ENCODE measurements at regions of chr16 and their contacts with region 1.

Region 1: DNA sequence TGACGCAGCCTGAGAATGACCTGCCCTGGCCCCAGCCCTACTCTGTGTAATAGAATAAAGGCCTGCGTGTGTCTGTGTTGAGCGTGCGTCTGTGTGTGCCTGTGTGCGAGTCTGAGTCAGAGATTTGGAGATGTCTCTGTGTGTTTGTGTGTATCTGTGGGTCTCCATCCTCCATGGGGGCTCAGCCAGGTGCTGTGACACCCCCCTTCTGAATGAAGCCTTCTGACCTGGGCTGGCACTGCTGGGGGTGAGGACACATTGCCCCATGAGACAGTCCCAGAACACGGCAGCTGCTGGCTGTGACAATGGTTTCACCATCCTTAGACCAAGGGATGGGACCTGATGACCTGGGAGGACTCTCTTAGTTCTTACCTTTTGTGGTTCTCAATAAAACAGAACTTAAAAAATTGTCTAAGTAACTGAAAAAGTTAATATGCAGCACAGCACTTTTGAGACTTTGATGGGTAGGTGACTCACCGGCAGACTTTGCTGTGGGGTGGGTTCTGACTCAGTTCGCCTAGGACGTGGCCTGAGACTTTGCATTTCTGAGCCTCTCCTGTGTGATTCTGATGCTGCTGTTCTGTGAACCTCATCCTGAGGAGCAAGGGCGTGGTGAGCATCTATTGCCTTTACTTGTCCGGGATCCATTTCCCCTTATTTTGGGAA is 5.7 kb downstream of the LAT start:
- DNase-seq: peak; percentile 81
- H3K4me3 Mint-ChIP-seq: peak overlapping the region; percentile 82
- H3K27ac Mint-ChIP-seq: peak overlapping the region; percentile 92
- H3K4me1 Mint-ChIP-seq: peaks cover 41% of the 10 kb centered on the region
- H3K27me3 Mint-ChIP-seq: no peaks in the 10 kb centered on the region

Region 2: GRCh38 chr16:28950648-28951409 is 39.7 kb before region 1 on chr16 and contains the start of gene NFATC2IP:
- intact Hi-C with region 1: loop called (anchors 1 kb)
- DNase-seq: peak; percentile 100
- H3K4me3 Mint-ChIP-seq: peak within 1 kb of the TSS; percentile 93
- H3K27ac Mint-ChIP-seq: peak within 1 kb of the TSS; percentile 94
- H3K4me1 Mint-ChIP-seq: peaks cover 27% of the 10 kb centered on the region
- H3K27me3 Mint-ChIP-seq: no peaks in the 10 kb centered on the region
- total RNA-seq, gene NFATC2IP: 108 and 112 TPM in 2 replicates

Region 3: DNA sequence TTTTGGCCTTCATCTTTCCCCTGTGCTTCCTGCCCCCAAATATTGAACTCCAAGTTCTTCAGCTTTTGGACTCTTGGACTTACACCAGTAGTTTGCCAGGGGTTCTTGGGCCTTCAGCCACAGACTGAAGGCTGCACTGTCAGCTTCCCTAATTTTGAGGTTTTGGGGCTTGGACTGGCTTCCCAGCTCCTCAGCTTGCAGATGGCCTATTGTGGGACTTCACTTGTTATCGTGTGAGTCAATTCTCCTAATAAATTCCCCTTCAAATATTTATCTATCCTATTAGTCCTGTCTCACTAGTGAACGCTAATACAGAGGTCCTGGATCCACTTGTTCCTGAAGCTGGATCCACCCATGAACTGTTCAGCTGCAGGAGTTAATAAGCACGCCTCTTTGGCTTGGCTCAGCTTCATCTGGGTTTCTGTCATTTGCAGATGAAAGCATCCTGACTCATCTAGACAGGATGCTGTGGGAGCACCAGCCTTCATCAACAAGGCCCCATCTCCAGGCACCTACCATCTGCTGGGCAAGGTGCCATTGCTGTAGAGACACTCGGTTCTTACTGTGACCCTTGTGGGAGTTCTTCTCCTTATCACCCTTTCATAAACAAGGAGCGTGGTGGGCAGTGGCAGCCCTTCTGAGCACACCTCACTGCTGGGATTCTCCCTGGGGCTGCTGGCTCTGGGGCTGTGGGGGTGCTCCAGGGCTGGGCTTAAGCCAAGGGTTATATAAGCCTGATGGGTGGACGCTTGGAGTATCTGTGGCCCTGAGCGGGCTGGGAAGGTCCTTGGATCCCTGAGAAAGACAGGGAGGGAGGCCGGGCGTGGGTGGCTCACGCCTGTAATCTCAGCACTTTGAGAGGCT is 17.5 kb after region 1 on chr16:
- intact Hi-C with region 1: loop called (anchors 1 kb)
- DNase-seq: peak; percentile 89
- H3K4me3 Mint-ChIP-seq: peak overlapping the region; percentile 69
- H3K27ac Mint-ChIP-seq: peak overlapping the region; percentile 95
- H3K4me1 Mint-ChIP-seq: peaks cover 43% of the 10 kb centered on the region
- H3K27me3 Mint-ChIP-seq: no peaks in the 10 kb centered on the region

Region 4: DNA sequence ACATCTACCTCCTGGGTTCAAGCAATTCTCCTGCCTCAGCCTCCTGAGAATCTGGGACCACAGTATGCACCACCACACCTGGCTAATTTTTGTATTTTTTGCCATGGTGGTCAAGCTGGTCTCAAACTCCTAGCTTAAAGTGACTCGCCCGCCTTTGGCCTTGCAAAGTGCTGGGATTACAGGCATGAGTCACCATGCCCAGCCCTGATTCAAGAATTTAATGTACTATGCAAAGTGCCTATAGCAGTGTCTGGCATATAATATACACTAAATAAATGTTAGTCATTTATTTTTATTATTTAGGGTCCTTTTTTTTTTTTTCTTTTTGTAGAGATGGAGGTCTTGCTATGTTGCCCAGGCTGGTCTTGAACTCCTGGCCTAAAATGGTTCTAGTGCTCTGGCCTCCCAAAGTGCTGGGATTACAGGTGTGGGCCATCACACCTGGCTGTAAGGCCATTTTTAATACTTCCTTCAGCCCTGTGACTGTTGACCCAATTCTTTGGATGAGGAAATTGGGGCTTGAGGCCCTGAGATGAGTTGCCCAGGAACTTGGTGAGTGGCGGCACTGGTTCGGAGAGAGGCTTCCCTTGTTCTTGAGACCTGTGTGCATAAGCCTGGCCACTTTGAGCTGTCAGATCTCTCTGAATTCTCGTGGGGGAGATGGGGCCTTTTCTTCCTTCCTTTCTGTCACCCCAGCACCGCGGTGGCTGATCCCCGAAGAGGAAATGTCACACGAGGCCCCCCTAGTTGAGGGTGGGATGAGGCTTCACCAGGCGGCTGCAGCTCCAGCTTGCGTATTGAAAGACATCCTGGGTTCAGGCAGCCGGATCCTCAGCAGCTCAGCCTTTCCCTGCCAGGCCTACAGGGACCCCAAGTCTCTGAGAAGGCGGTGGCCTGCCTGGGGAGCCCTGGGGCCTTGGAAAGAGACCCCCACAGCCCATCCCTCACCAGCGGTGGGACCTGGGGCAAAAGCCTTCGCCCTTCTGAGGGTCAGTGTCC is 33.1 kb after region 1 on chr16:
- intact Hi-C with region 1: loop called (anchors 1 kb)
- DNase-seq: no peak
- H3K4me3 Mint-ChIP-seq: no peak overlapping the region
- H3K27ac Mint-ChIP-seq: peak overlapping the region; percentile 62
- H3K4me1 Mint-ChIP-seq: peaks cover 45% of the 10 kb centered on the region
- H3K27me3 Mint-ChIP-seq: no peaks in the 10 kb centered on the region

Region 5: DNA sequence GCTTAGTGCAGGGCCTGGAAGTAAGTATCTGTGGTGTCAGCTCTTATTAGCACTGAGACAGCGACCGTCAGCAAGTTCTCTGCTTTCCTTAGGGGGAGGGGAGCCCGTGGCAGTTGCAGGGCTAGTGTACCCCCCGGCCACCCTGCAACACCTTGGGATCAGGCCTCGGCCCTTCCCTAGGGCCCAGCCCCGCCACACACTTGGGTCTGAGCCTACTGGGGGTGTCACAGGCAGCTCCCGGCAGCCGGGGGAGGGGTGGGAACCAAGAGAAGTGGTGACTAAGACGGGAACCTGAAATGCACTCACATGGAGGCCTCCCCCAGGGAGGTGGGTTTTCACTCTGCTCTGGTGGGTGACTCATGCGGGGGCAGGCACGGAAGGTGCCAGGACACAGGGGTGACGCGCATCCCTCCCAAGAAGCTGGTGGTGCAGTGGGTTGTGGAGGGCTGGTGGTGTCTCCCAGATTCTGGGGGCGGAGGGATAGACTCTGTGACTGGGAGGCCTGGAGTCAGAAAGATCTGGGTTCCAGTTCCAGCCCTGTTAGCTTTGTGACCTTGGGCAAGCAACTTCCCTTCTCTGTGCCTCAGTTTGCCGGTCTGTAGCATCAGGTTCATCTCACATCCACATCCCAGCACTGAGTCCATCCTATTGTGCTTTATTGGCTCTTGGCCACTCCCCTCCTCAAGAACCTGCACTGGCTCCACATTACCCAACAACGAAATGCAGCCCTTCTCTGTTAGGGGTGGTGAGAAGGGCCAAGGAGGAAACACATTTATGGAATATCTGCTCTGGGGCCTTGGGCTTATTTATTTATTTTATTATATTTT is 38.9 kb after region 1 on chr16:
- intact Hi-C with region 1: loop called (anchors 1 kb)
- DNase-seq: peak; percentile 84
- H3K4me3 Mint-ChIP-seq: peak overlapping the region; percentile 52
- H3K27ac Mint-ChIP-seq: peak overlapping the region; percentile 85
- H3K4me1 Mint-ChIP-seq: peaks cover 28% of the 10 kb centered on the region
- H3K27me3 Mint-ChIP-seq: no peaks in the 10 kb centered on the region

Region 6: DNA sequence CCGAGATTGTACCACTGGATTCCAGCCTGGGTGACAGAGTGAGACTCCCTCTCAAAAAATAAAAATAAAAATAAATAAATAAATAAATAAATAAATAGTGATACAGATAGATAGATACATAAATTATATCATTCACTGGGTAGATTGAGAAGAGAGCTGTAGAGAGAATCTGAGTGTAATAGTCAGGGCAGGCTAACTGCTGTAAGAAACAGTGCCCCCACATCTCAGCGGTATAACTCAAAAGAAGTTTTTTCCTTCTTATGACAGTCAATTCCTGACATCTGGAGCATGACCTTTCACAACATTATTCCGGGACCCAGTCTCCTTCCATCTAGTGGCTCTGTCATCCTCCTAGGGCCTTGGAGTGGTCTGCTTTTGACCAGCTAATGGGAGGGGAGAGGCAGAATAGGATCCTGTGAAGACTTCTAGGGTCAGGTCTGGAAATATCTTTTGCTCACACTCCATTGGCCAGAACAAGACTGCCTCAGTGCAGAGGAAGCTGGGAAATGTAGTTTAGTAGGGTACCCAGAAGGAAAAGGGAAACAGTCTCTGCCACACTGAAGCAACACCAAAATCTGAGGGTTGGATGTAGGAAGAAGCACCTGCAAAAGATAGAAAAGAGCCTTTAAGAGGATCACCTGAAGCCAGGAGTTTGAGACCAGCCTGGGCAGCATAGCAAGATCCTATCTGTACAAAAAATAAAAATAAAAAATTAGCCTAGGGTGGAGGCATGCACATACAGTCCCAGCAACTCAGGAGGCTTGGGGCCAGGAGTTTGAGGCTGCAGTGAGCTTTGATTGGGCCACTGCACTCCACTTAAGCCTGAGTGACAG is 685.5 kb after region 1 on chr16:
- intact Hi-C with region 1: no loop called
- DNase-seq: peak; percentile 76
- H3K4me3 Mint-ChIP-seq: no peak overlapping the region
- H3K27ac Mint-ChIP-seq: peak overlapping the region; percentile 38
- H3K4me1 Mint-ChIP-seq: peaks cover 28% of the 10 kb centered on the region
- H3K27me3 Mint-ChIP-seq: no peaks in the 10 kb centered on the region